CD8-positive, alpha-beta T cell (primary cell): ENCODE measurements at regions of chr15 and their contacts with region 1.

Region 1: DNA sequence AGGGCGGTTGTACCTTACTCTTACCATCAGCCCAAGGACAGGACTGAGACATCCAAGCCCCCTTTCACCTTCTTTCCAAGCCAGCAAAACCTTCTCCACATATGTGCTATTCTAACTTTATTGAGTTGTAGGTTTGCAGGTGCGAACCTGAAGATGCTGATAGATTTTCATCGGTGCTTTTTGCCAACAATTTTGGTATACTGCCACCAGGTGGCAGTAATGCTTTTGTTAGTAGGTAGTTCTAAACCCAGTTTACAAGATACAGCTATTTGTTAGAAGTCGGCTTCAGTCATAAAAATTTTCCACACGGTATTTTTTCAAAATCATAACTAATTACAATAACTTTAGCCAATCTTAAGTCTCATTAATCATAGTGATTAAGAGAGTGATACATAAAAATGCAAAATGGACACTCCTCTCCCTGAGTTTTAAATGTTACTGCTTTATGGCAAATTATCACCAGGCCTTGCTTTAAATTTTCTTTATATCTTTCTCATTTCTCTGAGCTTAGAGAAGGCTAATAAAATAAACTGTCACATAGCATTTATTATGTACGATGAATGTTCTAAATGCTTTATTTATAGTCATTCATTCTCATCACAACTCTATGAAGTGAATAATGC is 636 bp downstream of the TBC1D21 start:
- DNase-seq: peak in 4 of 9 experiments; percentile 21 to 69 (median 38)
- ATAC-seq: peak; percentile 38
- H3K4me3 ChIP-seq: no peak overlapping the region
- H3K4me3 Mint-ChIP-seq: no peak overlapping the region
- H3K27ac ChIP-seq: no peak overlapping the region
- H3K27ac Mint-ChIP-seq: no peak overlapping the region
- H3K4me1 ChIP-seq: no peaks in the 10 kb centered on the region
- H3K4me1 Mint-ChIP-seq: no peaks in the 10 kb centered on the region
- H3K27me3 ChIP-seq: peaks cover 0 to 3% of the 10 kb centered on the region in 2 experiments
- H3K27me3 Mint-ChIP-seq: peaks cover 41% of the 10 kb centered on the region
- CTCF ChIP-seq: peak; percentile 68

Region 2: DNA sequence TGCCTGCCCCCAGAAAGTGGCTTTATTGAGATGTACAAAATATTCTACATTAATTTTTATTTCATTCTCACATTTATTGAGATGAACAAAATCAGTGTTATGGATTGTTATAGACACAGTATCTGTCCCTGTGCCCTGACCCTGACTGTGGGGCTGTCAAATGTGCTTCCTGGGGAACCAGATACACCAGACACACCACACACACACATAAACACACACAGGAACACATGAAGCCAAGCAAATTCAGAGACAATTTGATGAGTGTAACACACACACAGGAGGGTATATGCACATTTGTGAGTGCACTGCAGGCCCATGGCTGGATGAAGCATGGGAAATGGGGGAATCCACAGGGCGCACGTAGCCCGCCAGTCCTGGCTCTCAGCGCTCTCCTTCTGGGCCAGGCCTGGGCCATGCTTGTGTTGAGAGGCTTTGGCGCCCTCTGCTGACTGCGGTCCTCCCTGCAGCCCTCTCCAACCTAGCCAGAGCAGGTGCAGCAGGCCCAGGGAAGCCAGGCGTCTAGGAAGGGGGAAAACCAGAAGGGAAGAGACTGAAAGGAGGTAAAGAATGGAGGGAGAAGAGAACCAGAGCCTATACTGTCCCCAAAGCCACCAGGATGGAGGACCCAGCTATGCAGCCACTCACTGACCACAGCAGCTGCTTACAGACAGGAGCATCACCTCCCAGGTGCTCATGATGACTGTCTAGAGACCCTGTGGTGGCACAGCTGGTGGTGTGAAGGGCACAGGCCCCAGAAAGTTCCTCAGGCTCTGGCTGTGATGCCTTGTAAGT is 34.2 kb after region 1 on chr15:
- CTCF ChIA-PET with region 1: interaction called, 45 read pairs
- POLR2A ChIA-PET with region 1: no interaction called
- intact Hi-C with region 1: loop called in 1 of 2 experiments (anchors 1 kb)
- DNase-seq: peak; percentile 53 to 81 (median 74)
- ATAC-seq: peak; percentile 89
- H3K4me3 ChIP-seq: no peak overlapping the region
- H3K4me3 Mint-ChIP-seq: no peak overlapping the region
- H3K27ac ChIP-seq: no peak overlapping the region
- H3K27ac Mint-ChIP-seq: no peak overlapping the region
- H3K4me1 ChIP-seq: no peaks in the 10 kb centered on the region
- H3K4me1 Mint-ChIP-seq: no peaks in the 10 kb centered on the region
- H3K27me3 ChIP-seq: no peaks in the 10 kb centered on the region
- H3K27me3 Mint-ChIP-seq: no peaks in the 10 kb centered on the region
- CTCF ChIP-seq: peak; percentile 79

Region 3: GRCh38 chr15:73927476-73928240 is 53.7 kb after region 1 on chr15:
- CTCF ChIA-PET with region 1: interaction called, 12 read pairs
- POLR2A ChIA-PET with region 1: no interaction called
- intact Hi-C with region 1: loop called (anchors 1 to 5 kb)
- DNase-seq: peak; percentile 56 to 87 (median 77)
- ATAC-seq: peak; percentile 88
- H3K4me3 ChIP-seq: peak overlapping the region; percentile 49 to 79
- H3K4me3 Mint-ChIP-seq: peak overlapping the region; percentile 79
- H3K27ac ChIP-seq: peak overlapping the region in 1 of 2 experiments; percentile 41
- H3K27ac Mint-ChIP-seq: peak overlapping the region; percentile 20
- H3K4me1 ChIP-seq: peaks cover 27% of the 10 kb centered on the region
- H3K4me1 Mint-ChIP-seq: peaks cover 38% of the 10 kb centered on the region
- H3K27me3 ChIP-seq: no peaks in the 10 kb centered on the region
- H3K27me3 Mint-ChIP-seq: no peaks in the 10 kb centered on the region
- CTCF ChIP-seq: peak; percentile 83

Region 4: GRCh38 chr15:73964736-73965093 is 90.7 kb after region 1 on chr15:
- CTCF ChIA-PET with region 1: interaction called, 6 read pairs
- POLR2A ChIA-PET with region 1: no interaction called
- intact Hi-C with region 1: loop called in 1 of 2 experiments (anchors 1 kb)
- DNase-seq: peak; percentile 74 to 94 (median 88)
- ATAC-seq: peak; percentile 89
- H3K4me3 ChIP-seq: peak overlapping the region; percentile 46 to 51
- H3K4me3 Mint-ChIP-seq: peak overlapping the region; percentile 83
- H3K27ac ChIP-seq: no peak overlapping the region
- H3K27ac Mint-ChIP-seq: peak overlapping the region; percentile 39
- H3K4me1 ChIP-seq: peaks cover 26% of the 10 kb centered on the region
- H3K4me1 Mint-ChIP-seq: peaks cover 34% of the 10 kb centered on the region
- H3K27me3 ChIP-seq: no peaks in the 10 kb centered on the region
- H3K27me3 Mint-ChIP-seq: no peaks in the 10 kb centered on the region
- CTCF ChIP-seq: peak; percentile 95

Region 5: GRCh38 chr15:74460871-74461846 is 587.2 kb after region 1 on chr15 and contains the start of gene UBL7:
- CTCF ChIA-PET with region 1: no interaction called
- POLR2A ChIA-PET with region 1: no interaction called
- intact Hi-C with region 1: no loop called
- DNase-seq: peak; percentile 93 to 99 (median 96)
- ATAC-seq: peak; percentile 98
- H3K4me3 ChIP-seq: peak within 1 kb of the TSS; percentile 74 to 85
- H3K4me3 Mint-ChIP-seq: peak within 1 kb of the TSS; percentile 93
- H3K27ac ChIP-seq: peak within 1 kb of the TSS; percentile 53 to 83
- H3K27ac Mint-ChIP-seq: peak within 1 kb of the TSS; percentile 94
- H3K4me1 ChIP-seq: peaks cover 21% of the 10 kb centered on the region
- H3K4me1 Mint-ChIP-seq: peaks cover 50% of the 10 kb centered on the region
- H3K27me3 ChIP-seq: no peaks in the 10 kb centered on the region
- H3K27me3 Mint-ChIP-seq: no peaks in the 10 kb centered on the region
- CTCF ChIP-seq: no peak
- total RNA-seq, gene UBL7: 21.7 to 23.1 TPM